Heart right ventricle (tissue), 16 donors: ENCODE measurements at regions of chr7 and their contacts with region 1.

Region 1: DNA sequence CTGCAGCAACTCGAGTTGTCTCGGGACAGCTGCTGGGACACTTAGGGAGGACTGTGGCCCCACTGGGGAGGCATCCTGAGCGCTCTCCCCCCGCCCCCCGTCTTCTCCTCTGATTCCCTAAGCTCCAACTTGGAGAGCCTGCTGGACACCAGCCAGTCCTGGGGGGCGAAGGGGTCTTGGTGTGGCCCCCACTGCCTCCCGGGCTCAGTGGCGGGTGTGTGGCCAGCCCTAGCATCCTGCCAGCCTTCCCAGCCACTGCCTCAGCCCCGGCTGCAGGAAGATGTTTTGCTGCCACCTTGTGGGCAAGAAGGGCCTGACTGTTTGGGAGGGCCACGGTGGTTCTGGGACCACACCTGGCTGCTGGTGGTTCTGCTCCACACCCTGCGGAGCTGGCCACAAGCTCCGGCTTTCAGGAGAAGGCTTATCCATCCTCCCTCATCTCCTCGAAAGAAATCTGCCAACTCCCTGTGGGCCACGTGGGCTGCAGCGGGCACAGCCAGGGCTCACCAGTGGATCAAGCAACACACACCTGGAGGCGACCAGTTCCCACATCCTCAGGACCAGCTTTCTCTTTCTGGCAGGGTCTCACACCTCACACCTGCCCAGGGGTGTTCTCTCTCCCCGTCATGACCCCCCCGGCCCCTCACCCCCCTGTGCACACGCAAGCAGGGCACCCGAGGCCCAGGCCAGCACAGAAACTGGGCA is 24.8 kb downstream of the AGAP3 start:
- DNase-seq: peak; percentile 78 to 83
- ATAC-seq: peak; percentile 75 to 91 (median 86)
- H3K4me3 ChIP-seq: no peak overlapping the region
- H3K27ac ChIP-seq: no peak overlapping the region
- H3K4me1 ChIP-seq: peaks cover 3 to 44% (median 28%) of the 10 kb centered on the region in 9 donors
- H3K27me3 ChIP-seq: no peaks in the 10 kb centered on the region
- CTCF ChIP-seq: peak; percentile 83 to 95 (median 91)

Region 2: GRCh38 chr7:150898475-150899011 is 212.6 kb before region 1 on chr7:
- intact Hi-C with region 1: loop called in 1 of 10 experiments (anchors 10 kb)
- DNase-seq: peak; percentile 74 to 81
- ATAC-seq: peak; percentile 48 to 87 (median 68)
- H3K4me3 ChIP-seq: no peak overlapping the region
- H3K27ac ChIP-seq: no peak overlapping the region
- H3K4me1 ChIP-seq: peaks cover 0 to 25% (median 9%) of the 10 kb centered on the region in 9 donors
- H3K27me3 ChIP-seq: peaks cover 0 to 53% (median 32%) of the 10 kb centered on the region in 7 donors
- CTCF ChIP-seq: peak; percentile 84 to 97 (median 95)

Region 3: GRCh38 chr7:150962553-150963399 is 148.3 kb before region 1 on chr7:
- intact Hi-C with region 1: loop called in 2 of 10 experiments (anchors 5 to 10 kb)
- DNase-seq: peak; percentile 69 to 70
- ATAC-seq: peak; percentile 43 to 72 (median 54)
- H3K4me3 ChIP-seq: no peak overlapping the region
- H3K27ac ChIP-seq: peak overlapping the region; percentile 57 to 93 (median 88)
- H3K4me1 ChIP-seq: peaks cover 12 to 94% (median 50%) of the 10 kb centered on the region in 9 donors
- H3K27me3 ChIP-seq: peaks cover 0 to 53% (median 21%) of the 10 kb centered on the region in 7 donors
- CTCF ChIP-seq: peak; percentile 67 to 92 (median 88)

Region 4: DNA sequence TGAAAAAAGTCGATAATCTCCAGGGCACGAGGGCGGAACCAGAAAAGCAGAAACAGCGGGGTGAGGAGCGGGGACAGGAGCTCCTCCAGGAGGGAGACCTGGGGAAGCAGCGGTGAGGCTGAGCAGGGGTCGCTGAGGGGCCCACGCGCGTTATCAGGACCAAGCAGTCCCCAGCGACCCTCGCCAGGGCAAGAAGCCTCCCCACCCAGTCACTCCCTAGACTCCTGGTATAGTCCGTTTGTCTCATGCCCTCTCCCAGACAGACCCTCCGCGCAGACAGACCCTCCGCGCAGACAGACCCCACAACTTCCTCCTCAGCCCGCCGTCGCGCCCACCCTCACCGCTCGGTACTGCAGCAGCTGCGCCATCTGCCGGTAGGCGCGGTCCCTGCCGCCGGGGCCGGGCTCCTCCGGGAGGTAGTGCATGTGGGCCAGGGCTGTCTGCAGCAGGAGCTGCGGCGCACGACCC is 93.1 kb before region 1 on chr7:
- intact Hi-C with region 1: loop called in 1 of 10 experiments (anchors 1 kb)
- DNase-seq: peak; percentile 67 to 77
- ATAC-seq: peak; percentile 55 to 80 (median 69)
- H3K4me3 ChIP-seq: peak overlapping the region in 7 of 10 donors; percentile 9 to 37 (median 22)
- H3K27ac ChIP-seq: no peak overlapping the region
- H3K4me1 ChIP-seq: peaks cover 9 to 49% (median 31%) of the 10 kb centered on the region in 9 donors
- H3K27me3 ChIP-seq: peaks cover 0 to 56% (median 53%) of the 10 kb centered on the region in 7 donors
- CTCF ChIP-seq: peak; percentile 85 to 97 (median 95)

Region 5: DNA sequence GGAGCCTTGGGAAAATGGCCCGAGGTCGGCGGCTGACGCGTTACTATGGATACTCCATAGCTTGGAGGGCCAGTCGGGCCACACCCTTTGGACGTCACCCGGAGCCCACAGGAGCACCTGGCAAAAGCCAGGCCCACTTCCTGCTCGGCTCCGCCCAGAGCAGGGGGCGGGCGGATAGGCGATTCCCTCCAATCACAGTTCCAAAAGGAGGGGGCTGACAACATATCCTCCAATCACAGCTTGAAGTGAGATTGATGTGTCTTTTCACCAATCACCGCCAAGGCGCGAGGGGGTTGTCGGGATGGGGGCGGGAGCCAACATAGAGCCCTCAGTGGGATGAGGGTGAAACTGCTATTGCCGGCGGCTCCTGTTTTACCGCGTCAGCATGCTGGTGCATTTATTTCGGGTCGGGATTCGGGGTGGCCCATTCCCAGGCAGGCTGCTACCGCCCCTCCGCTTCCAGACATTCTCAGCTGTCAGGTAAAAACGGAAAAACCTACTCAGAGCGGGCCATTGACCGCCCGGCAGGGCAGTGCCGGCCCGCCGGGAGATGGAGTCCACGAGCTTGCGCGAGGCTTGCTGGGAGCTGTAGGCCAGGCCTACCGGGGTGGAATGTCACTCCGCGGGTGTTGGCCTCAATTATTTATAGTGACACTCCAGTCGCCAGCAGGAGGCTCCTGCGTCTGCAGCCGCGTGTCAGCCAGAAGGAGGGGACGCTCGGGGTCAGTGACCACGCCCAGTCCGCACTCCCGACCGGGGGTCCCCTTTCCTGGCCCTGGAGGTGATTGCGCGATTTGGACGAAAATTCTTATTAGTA is 82.8 kb before region 1 on chr7 and contains the start of gene ABCB8:
- intact Hi-C with region 1: loop called in 9 of 10 experiments (anchors 2 to 10 kb)
- DNase-seq: peak; percentile 95 to 100
- ATAC-seq: peak; percentile 94 to 98 (median 96)
- H3K4me3 ChIP-seq: peak within 1 kb of the TSS; percentile 29 to 84 (median 74)
- H3K27ac ChIP-seq: peak within 1 kb of the TSS; percentile 36 to 91 (median 82)
- H3K4me1 ChIP-seq: peaks cover 3 to 21% (median 14%) of the 10 kb centered on the region in 9 donors
- H3K27me3 ChIP-seq: peaks cover 0 to 3% (median 0%) of the 10 kb centered on the region in 7 donors
- CTCF ChIP-seq: peak in 8 of 9 donors; percentile 39 to 82 (median 64)
- total RNA-seq, gene ABCB8: 20.9 to 32.4 (median 24.6) TPM

Region 6: DNA sequence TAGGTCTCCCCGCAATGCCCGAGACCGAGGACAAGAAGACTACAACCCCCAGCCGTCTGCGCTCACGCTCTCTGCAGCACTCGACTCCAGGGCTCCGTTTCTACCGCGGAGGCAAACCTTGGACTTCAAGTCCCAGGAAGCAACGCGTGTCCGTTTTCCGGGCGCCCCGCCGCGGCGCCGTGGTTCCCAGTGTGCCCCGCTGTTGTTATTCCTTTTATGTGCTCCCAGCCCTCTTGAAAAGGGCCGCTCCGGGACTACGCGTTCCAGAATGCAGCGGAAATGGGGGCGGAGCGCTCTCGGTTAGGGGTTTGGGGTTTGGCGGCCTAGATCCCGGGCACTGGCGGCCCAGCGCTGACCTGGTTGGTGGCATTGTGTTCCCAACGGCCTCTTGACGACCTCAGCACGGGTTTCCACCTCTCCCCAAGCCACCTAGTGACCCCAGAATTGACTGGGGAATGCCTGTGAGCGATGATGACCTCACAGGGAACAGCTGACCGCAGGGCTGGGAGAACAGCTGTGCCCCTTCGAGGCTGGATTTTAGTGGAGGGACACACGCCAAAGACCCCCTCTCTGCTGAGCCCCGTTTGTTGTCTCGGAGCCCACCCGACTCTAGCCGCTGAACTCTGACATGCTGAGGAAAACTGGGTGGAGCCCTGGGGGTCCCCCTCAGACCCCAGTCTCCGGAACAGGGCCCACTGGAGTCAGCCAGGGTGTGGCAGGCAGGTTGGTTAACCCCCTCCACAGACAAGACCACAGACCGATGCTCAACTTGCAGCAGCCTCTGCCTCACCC is 52.9 kb before region 1 on chr7:
- intact Hi-C with region 1: loop called in 2 of 10 experiments (anchors 1 to 10 kb)
- DNase-seq: peak; percentile 98 to 99
- ATAC-seq: peak; percentile 89 to 93 (median 90)
- H3K4me3 ChIP-seq: peak overlapping the region; percentile 22 to 95 (median 88)
- H3K27ac ChIP-seq: peak overlapping the region; percentile 94 to 98 (median 97)
- H3K4me1 ChIP-seq: peaks cover 33 to 55% (median 50%) of the 10 kb centered on the region in 9 donors
- H3K27me3 ChIP-seq: no peaks in the 10 kb centered on the region
- CTCF ChIP-seq: peak in 1 of 9 donors; percentile 18

Region 7: DNA sequence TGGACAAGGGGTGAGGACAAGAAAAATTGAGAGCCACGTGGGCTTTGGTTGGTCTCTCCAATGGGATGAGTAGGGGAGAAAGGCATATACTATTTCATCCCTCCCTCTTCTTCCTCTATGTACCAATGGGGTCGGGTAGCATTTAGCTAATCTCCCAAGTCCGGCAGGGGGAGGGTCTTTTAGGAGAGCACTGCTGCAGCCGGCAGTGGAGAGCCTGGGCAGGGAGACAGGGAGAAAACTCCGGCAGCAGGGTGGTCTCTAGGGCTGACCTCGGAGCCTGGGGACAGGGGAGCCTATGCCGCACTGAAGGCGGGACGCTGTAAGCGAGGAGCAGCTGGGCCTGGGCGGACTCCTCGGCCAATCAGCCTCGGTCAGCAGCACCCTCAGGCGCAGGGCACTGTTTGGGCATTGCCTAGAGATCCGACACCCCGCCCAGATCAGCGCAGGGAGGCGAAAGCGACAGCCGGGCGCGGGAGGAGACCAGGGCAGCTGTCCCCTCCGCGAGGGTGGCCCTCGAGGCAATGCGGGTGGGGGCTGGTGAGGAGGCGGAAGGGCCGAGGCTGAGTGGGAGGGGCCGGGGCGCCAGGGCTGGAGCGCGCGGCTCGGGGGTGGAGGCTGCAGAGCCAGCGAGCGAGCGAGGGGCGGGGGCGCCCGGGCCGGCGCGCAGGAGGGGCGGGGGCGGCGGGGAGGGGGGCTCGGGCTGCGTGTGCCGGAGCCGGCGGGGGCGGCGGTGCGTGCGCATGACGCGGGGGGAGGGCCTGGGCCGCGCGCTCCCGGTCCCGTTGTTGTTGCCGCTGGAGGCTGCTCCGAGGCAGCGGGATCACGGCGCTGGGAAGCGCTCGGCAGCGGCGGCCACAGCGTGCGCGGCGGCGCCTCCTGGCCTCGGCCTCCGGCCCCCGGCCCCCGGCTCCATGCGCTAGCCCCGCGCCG is 25.1 kb before region 1 on chr7 and contains the start of gene AGAP3:
- intact Hi-C with region 1: loop called in 1 of 10 experiments (anchors 2 kb)
- DNase-seq: peak; percentile 89 to 91
- ATAC-seq: peak; percentile 59 to 72 (median 66)
- H3K4me3 ChIP-seq: peak within 1 kb of the TSS; percentile 69 to 88 (median 78)
- H3K27ac ChIP-seq: peak within 1 kb of the TSS; percentile 81 to 94 (median 90)
- H3K4me1 ChIP-seq: peaks cover 41 to 72% (median 69%) of the 10 kb centered on the region in 9 donors
- H3K27me3 ChIP-seq: no peaks in the 10 kb centered on the region
- CTCF ChIP-seq: no peak
- total RNA-seq, gene AGAP3: 40.5 to 93.4 (median 50.3) TPM